Lower leg skin (tissue), 4 donors: ENCODE measurements at regions of chr19 and their contacts with region 1.

Region 1: GRCh38 chr19:35055715-35056179 is 14.2 kb downstream of the HPN start:
- DNase-seq: no peak
- H3K4me3 ChIP-seq: no peak overlapping the region
- CTCF ChIP-seq: no peak
- POLR2A ChIP-seq: no peak

Region 2: DNA sequence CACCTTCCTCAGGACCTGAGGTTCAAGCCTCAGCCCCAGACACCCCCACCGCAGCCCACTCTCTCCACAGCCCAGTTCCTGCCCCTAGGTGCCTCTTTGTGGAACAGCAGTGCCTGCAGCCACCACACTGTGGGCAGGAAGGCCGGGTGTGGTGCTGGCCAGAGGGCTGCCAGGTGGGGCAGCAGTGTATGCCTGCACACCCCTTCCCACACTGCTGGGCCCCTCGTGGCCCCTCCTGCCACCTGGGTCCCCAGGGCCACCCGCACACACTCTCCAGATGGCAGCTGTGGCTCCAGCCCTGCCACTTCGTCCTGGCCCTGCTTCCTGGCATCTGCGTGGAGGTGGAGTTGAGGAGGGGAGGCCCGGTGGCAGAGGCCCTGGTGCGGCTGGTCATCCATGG is 20.9 kb after region 1 on chr19:
- intact Hi-C with region 1: no loop called
- DNase-seq: no peak
- H3K4me3 ChIP-seq: no peak overlapping the region
- CTCF ChIP-seq: no peak
- POLR2A ChIP-seq: no peak

Region 3: DNA sequence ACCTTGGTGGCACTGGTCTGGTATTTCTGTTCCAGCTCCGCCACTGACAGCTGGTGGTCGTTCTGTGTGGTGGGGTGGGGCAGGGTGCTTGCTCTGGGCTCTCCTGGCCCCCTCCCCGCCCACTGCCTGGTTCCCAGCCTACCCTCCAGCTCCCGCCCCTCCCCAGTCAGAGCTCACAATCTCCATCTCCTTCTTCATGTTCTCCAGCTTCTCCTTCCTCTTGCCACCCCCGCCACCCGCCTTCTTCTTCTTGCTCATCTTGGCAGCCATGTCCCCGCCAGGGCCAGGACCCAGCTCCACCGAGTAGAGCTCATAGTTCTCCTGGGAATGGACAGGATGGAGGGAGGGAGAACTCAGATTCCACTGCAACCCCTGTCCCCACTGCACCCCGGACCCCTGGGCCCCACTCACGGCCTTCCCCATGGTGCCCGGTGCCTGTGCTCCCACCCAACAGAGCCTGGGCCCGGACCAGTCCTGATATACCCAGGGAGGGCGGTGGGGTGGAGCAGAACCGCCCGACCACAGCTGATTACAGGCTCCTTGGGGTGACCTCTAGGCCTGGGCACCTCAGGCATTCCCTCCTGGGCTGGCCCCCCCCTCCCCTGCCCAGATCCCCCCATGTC is 507.6 kb after region 1 on chr19 and contains the start of gene ATP4A:
- intact Hi-C with region 1: loop called (anchors 5 kb)
- DNase-seq: no peak
- H3K4me3 ChIP-seq: no peak within 1 kb of the TSS
- CTCF ChIP-seq: no peak
- POLR2A ChIP-seq: no peak
- total RNA-seq, gene ATP4A: not detected